ENCODE measurements at regions of chr16 and their contacts with region 1.

Region 1: DNA sequence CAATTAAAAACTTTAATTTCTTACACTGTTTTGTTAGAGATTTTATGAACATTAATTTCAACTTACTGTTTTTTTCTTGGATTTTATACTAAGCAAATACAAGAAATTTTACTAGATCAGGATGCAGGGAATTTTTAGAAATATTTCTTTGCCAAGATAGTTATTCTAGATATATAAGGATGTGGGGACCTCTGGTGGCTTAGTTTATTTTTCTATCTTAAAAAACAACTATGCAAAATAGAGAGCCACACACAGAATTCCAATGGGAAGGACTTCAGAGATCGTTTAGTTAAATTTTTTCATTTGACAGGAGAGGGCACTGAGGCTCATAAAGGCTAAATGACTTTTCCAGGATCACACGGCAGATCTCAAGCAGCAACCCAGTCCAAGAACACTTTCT is 23.0 kb upstream of the CAPNS2 start:
- DNase-seq: no peak

Region 2: DNA sequence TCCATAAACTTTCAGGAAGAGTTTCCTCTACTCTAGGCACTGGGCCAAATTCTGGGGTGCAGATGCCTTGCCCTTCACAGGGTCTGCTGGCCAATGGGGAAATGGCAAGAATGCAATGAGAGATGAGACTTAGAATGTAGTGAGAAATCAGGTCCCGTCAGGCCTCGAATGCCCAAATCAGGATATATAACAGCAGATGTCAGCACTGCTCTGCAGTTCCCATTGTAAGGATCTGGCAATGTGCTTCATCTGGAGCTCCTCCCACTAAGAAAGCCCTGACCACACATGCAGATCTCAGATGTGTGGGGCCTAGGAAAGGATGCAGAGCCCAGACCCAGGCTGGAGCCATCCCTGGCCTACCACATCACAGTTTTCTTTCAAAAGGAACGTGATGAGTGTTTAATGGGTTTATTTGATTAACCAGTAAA is 48.5 kb before region 1 on chr16:
- intact Hi-C with region 1: loop called (anchors 1 kb)
- DNase-seq: peak in 5 of 10 donors; percentile 26 to 87 (median 48)

Region 3: GRCh38 chr16:55502801-55503366 is 40.6 kb before region 1 on chr16:
- intact Hi-C with region 1: loop called (anchors 2 kb)
- DNase-seq: peak; percentile 83 to 98 (median 90)

Region 4: GRCh38 chr16:55701442-55702319 is 158.2 kb after region 1 on chr16:
- intact Hi-C with region 1: loop called (anchors 5 kb)
- DNase-seq: peak in 6 of 10 donors; percentile 23 to 91 (median 50)